ENCODE measurements at regions of chr19 and their contacts with region 1.

Region 1: DNA sequence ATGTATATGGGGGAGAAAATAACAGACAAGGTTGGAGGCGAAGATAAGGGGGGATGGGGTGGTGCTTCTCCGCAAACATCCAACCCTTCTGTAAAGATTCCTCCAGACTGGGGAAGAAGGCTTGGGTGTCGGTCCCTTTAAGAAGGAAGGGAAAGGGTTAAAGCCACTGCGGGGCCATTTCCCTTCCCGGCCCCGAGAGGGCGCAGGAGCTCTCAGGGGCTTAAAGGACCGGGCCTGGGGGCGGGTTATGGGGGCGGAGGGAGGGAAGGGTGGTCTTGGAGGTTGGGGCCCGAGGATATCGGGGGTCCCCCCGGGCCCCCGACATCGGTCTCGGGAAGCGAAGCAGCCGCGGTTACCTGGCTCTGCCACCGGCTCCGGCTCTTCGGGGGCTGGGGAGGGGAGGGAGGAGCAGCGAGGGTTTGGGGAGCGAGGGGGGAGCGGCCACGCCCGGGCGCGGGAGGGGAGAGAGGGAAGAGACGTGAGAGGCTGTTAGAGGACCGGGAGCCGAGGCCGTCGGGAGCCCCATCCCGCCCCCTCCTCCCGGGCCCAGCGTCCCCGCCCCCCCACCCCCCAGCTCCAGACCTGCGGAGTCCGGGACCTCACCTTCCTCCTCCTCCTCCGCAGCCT is 2.8 kb downstream of the TNNT1 start:
- DNase-seq: no peak
- H3K4me3 ChIP-seq: peak overlapping the region in 2 of 3 donors; percentile 37 to 64
- H3K27ac ChIP-seq: no peak overlapping the region
- H3K4me1 ChIP-seq: no peaks in the 10 kb centered on the region
- H3K27me3 ChIP-seq: peaks cover 7 to 82% of the 10 kb centered on the region in 2 donors
- CTCF ChIP-seq: no peak
- POLR2A ChIP-seq: no peak

Region 2: DNA sequence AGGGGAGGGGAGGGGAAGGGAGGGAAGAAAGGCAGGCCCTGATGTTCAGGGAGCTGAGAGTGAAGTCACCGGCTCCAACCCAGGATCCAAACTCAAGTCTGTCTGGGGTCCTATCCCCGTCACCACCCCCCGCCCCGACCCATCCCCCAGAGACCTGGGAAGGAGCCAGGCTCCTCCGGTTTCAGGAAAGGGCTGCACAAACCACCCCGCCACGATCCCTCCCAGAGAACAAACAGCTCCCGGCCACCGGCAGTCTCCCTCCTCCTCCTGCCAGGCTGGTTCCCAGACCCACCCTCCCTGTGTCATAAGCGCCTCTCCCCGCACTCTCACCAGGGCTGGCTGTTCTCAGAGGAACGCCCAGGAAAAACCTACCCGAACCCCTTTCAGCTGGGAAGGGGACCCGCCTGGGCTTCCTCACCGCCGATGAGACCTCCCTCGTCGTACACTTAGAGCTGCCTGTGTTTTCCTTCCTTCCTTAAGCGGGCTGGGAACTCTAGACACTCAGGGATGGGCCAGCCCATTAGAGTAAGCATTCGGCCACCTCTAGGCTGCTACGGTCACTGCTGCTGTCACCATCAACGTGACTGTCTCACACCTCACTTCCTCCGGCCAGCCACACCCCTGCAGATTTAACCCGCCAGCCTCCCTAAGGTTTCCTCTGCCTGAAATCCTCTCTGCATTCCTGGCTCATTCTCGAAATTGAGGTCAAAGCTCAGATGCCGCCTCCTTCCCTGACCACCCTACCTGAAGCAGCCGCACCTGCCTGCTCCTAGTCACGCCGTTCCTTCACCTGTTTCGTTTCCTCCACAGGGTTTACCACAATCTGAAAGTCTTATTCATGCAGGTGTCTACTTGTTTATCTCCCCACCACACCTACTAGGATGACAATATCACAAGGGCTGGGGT is 77.0 kb before region 1 on chr19:
- intact Hi-C with region 1: no loop called
- DNase-seq: peak; percentile 70 to 92
- H3K4me3 ChIP-seq: peak overlapping the region in 2 of 3 donors; percentile 52 to 62
- H3K27ac ChIP-seq: peak overlapping the region; percentile 87 to 88
- H3K4me1 ChIP-seq: no peaks in the 10 kb centered on the region
- H3K27me3 ChIP-seq: peaks cover 3 to 5% of the 10 kb centered on the region in 2 donors
- CTCF ChIP-seq: peak in 2 of 3 donors; percentile 31 to 45
- POLR2A ChIP-seq: peak; percentile 37

Region 3: DNA sequence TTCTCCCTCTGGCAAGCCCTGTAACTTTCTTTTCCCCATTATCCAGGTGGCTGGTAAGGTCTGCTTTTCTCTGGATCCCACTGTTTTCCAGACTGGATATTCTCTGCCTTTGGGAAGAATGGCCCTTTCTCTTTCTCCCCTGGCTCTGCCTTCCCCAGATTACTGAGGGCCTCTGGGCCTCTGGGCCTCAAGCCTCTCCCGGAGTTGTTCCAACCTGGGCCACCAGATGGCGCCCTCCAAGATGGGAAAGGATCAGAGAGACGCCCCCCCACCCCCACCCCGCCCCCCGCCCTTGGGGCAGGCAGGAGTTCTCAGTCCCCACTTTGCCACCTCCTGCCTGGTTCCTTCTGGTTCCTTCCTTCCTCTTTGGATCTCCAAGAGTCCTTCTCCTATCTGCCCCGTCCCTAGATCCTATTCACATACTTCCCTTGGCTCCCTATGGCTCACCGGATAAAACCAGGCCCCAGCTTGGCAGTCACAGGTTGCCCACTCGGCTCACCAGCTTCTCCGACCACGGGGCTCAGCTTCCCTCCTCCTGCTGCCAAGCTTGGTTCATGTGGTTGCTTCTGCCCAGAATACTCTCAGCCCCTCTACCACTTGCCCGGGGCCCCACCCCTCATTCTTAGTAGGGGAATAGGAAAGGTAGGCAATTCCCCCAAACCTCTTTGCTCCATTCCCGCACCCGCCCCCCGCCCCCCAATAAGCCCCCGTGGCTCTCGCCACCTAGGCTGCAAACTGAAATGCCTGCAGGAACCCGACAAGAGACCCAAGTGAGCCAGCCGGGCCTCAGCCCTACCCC is 57.4 kb before region 1 on chr19:
- intact Hi-C with region 1: no loop called
- DNase-seq: peak in 1 of 2 donors; percentile 76
- H3K4me3 ChIP-seq: no peak overlapping the region
- H3K27ac ChIP-seq: peak overlapping the region in 1 of 2 donors; percentile 7
- H3K4me1 ChIP-seq: peaks cover 0 to 6% of the 10 kb centered on the region in 2 donors
- H3K27me3 ChIP-seq: no peaks in the 10 kb centered on the region
- CTCF ChIP-seq: peak in 2 of 3 donors; percentile 27 to 32
- POLR2A ChIP-seq: no peak

Region 4: DNA sequence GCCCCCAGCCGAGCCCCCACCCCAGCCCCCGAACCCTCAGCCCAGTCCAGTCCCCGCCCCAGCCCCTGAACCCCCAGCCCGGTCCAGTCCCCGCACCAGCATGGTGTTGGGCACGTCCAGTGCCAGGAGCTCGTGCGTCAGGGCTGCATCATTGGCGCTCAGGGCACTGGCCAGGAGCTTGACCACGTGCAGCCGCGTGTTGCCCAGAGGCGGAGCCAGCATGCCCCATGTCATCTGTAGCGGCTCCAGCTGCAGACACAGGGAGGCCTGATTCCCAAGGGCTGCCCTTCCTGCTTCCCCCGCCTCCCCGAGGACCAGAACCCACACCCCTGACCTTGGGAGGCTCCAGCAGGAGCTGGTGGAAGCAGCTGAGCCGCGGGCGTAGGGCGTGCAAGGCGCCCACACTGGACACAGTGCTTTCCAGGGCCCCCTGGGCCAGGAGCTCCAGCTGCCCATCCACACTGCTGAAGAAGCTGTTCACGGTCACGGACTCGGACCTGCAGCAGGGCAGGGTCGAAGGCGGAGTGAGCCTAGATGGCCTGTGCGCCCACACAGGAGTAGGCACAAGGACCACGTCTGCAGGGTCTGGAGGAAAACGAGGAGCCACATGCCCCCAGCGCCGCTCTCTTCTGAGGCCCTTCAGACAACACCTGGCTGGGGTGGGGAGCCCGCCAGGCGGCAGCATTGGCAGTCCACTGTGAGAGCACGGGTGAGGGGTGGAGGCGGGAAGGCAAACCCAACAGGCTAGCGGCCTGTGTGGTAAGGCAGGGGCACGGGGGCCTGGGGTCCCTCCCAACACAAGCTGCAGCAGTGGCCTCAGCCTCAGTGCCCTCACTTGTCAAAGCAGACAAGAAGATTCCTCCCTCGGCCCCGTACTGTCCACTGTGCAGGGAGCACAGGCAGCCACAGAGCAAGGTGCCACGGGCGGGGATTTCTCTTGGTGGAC is 95.2 kb after region 1 on chr19:
- intact Hi-C with region 1: loop called (anchors 5 kb)
- DNase-seq: no peak
- H3K4me3 ChIP-seq: no peak overlapping the region
- H3K27ac ChIP-seq: no peak overlapping the region
- H3K4me1 ChIP-seq: no peaks in the 10 kb centered on the region
- H3K27me3 ChIP-seq: no peaks in the 10 kb centered on the region
- CTCF ChIP-seq: no peak
- POLR2A ChIP-seq: no peak